CD8-positive, alpha-beta T cell (primary cell): ENCODE measurements at regions of chr10 and their contacts with region 1.

Region 1: GRCh38 chr10:24887855-24888231 is 64.6 kb downstream of the PRTFDC1 start:
- DNase-seq: no peak
- ATAC-seq: no peak
- H3K4me3 ChIP-seq: peak overlapping the region in 1 of 2 experiments; percentile 28
- H3K4me3 Mint-ChIP-seq: peak overlapping the region; percentile 63
- H3K27ac ChIP-seq: peak overlapping the region; percentile 3 to 73
- H3K27ac Mint-ChIP-seq: peak overlapping the region; percentile 87
- H3K4me1 ChIP-seq: peaks cover 60% of the 10 kb centered on the region
- H3K4me1 Mint-ChIP-seq: peaks cover 79% of the 10 kb centered on the region
- H3K27me3 ChIP-seq: no peaks in the 10 kb centered on the region
- H3K27me3 Mint-ChIP-seq: no peaks in the 10 kb centered on the region
- CTCF ChIP-seq: no peak

Region 2: GRCh38 chr10:24394461-24395190 is 493.2 kb before region 1 on chr10:
- CTCF ChIA-PET with region 1: no interaction called
- POLR2A ChIA-PET with region 1: no interaction called
- intact Hi-C with region 1: no loop called
- DNase-seq: no peak
- ATAC-seq: no peak
- H3K4me3 ChIP-seq: no peak overlapping the region
- H3K4me3 Mint-ChIP-seq: no peak overlapping the region
- H3K27ac ChIP-seq: no peak overlapping the region
- H3K27ac Mint-ChIP-seq: no peak overlapping the region
- H3K4me1 ChIP-seq: no peaks in the 10 kb centered on the region
- H3K4me1 Mint-ChIP-seq: no peaks in the 10 kb centered on the region
- H3K27me3 ChIP-seq: no peaks in the 10 kb centered on the region
- H3K27me3 Mint-ChIP-seq: peaks cover 14% of the 10 kb centered on the region
- CTCF ChIP-seq: no peak

Region 3: DNA sequence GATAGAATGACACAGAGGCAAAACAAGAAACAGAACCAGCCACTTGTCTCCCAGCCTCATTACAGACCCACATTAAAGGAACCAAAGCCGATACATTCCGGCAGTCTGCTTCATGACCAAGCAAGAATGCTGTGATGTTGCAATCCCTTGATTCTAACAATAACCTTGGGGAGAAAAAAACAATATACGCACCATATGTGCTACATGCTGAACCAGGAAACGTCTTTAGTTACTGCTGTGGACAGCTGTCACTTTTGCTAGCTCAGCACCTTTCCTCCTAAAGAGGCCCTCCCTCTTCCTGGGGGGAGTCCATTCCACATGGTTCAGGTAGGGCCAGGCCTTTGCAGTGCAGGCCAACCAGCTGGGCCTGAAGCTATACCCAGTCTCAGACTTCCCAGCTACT is 14.6 kb before region 1 on chr10:
- CTCF ChIA-PET with region 1: no interaction called
- POLR2A ChIA-PET with region 1: no interaction called
- intact Hi-C with region 1: no loop called
- DNase-seq: peak in 1 of 9 experiments; percentile 24
- ATAC-seq: no peak
- H3K4me3 ChIP-seq: no peak overlapping the region
- H3K4me3 Mint-ChIP-seq: no peak overlapping the region
- H3K27ac ChIP-seq: no peak overlapping the region
- H3K27ac Mint-ChIP-seq: no peak overlapping the region
- H3K4me1 ChIP-seq: peaks cover 6% of the 10 kb centered on the region
- H3K4me1 Mint-ChIP-seq: peaks cover 21% of the 10 kb centered on the region
- H3K27me3 ChIP-seq: no peaks in the 10 kb centered on the region
- H3K27me3 Mint-ChIP-seq: no peaks in the 10 kb centered on the region
- CTCF ChIP-seq: no peak

Region 4: DNA sequence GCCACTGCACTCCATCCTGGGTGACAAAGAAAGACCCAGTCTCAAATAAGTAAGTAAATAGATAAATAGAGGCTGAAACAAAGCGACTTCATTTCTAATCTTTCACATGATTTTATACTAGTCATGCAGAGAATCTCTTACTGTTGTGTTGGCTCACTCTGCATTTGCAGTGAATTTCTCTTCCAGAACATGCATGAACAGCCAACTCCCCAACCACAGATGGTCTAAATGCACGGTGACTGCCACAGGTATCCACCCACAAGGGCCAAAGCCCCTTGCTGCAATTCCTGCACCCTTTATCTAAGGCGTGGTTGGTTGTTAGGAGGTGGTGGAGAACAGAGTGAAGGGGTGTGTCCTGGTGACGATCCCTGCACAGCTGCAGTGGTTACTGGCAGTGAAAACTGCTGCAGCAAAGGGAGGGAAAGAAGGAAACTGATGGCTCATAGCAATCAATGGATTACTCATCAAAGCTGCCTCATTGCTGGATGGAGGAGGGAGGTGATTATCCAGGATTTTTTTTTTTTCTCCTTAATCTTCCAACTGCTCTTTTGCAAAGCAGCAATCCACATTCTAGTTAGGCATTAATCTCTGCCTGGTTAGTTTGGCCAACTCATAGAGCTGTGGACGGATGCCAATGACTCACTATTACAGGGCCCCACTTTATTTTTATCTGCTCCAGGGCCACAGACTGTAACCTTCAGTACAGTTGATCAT is 14.0 kb after region 1 on chr10:
- CTCF ChIA-PET with region 1: interaction called, 5 read pairs
- POLR2A ChIA-PET with region 1: interaction called, 4 read pairs
- intact Hi-C with region 1: loop called in 1 of 2 experiments (anchors 2 kb)
- DNase-seq: no peak
- ATAC-seq: no peak
- H3K4me3 ChIP-seq: no peak overlapping the region
- H3K4me3 Mint-ChIP-seq: peak overlapping the region; percentile 30
- H3K27ac ChIP-seq: no peak overlapping the region
- H3K27ac Mint-ChIP-seq: peak overlapping the region; percentile 71
- H3K4me1 ChIP-seq: peaks cover 25% of the 10 kb centered on the region
- H3K4me1 Mint-ChIP-seq: peaks cover 31% of the 10 kb centered on the region
- H3K27me3 ChIP-seq: no peaks in the 10 kb centered on the region
- H3K27me3 Mint-ChIP-seq: no peaks in the 10 kb centered on the region
- CTCF ChIP-seq: no peak

Region 5: DNA sequence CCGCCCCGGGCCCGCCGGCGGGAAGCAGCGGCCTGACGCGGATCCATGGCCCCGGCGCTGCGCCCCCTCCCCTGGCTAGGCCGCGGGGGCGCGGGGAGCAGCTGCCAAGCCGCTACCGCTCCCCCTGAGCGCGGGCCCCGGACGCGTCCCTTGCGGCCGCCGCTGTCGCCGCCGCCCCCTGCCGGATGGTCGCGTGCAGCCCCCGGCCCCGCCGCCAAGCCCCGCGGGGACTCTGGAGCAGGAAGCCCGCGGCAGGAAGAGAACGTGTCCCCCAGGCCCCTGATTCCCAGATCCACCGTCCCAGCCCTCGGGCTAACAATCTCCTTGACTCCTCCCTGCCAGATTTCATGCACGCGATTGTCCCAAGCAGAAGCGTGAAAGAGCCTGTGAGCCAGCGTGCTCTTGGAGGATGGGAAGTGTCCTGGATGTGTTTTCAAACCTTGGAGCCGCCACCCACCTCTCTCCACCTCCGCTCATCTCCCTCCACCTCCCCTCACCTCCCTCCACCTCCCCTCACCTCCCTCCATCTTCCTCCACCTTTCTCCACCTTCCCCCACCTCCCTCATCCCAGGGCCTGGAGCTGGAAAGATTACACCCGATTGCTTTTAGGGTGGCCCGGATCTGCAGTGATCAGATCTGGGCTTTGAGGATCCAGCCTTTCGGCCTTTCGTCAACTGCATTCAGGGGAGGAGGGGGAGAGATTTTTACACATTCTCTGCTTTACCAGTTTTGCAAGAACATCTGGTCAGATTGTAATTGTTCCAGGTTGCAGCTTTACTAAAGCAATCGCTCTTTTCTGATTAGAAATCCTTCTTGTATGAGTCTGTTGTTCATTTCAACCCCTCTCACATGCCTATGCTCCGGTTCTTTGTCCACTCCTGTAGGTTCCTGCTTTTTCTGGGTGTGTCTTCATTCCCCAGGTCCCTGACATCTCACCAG is 65.1 kb after region 1 on chr10:
- CTCF ChIA-PET with region 1: interaction called, 4 read pairs
- POLR2A ChIA-PET with region 1: interaction called, 6 read pairs
- intact Hi-C with region 1: loop called (anchors 5 kb)
- DNase-seq: peak; percentile 25 to 84 (median 60)
- ATAC-seq: peak; percentile 82
- H3K4me3 ChIP-seq: peak overlapping the region; percentile 63 to 77
- H3K4me3 Mint-ChIP-seq: peak overlapping the region; percentile 82
- H3K27ac ChIP-seq: peak overlapping the region; percentile 31 to 35
- H3K27ac Mint-ChIP-seq: peak overlapping the region; percentile 84
- H3K4me1 ChIP-seq: peaks cover 15% of the 10 kb centered on the region
- H3K4me1 Mint-ChIP-seq: peaks cover 18% of the 10 kb centered on the region
- H3K27me3 ChIP-seq: no peaks in the 10 kb centered on the region
- H3K27me3 Mint-ChIP-seq: no peaks in the 10 kb centered on the region
- CTCF ChIP-seq: peak; percentile 63

Region 6: GRCh38 chr10:25068152-25069058 is 180.6 kb after region 1 on chr10:
- CTCF ChIA-PET with region 1: no interaction called
- POLR2A ChIA-PET with region 1: no interaction called
- intact Hi-C with region 1: no loop called
- DNase-seq: no peak
- ATAC-seq: no peak
- H3K4me3 ChIP-seq: no peak overlapping the region
- H3K4me3 Mint-ChIP-seq: no peak overlapping the region
- H3K27ac ChIP-seq: no peak overlapping the region
- H3K27ac Mint-ChIP-seq: no peak overlapping the region
- H3K4me1 ChIP-seq: no peaks in the 10 kb centered on the region
- H3K4me1 Mint-ChIP-seq: peaks cover 5% of the 10 kb centered on the region
- H3K27me3 ChIP-seq: no peaks in the 10 kb centered on the region
- H3K27me3 Mint-ChIP-seq: peaks cover under 1% of the 10 kb centered on the region
- CTCF ChIP-seq: no peak